MCF 10A (cell line): ENCODE measurements at regions of chr19 and their contacts with region 1.

Region 1: DNA sequence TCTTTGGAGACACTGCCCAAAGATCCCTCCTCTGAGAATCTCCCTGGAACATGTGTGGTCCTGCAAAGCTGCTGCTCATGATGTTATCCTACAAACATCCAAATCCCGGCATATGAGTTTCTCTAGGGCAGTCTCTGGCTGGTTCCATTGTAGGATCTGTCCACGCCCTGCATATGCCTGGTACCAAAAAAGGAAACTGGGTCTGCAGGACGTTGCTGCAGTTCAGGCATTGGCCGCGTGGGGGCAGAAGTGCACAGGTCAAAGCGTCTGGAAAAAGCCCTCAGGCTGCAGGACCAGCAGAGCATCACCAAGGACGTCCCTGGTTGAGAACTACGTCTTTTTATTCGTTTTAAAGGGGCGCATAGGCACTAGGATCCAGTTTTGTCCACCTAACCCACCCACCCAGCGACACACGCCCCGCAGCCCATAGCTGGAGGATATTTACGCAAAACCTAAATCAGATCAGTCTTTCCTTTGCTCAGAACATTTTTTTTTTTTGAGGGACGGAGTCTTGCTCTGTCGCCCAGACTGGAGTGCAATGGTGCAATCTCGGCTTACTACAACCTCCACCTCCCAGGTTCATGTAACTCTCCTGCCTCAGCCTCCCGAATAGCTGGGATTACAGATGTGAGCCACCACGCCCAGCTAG is 12.9 kb upstream of the ZNF564 start:
- DNase-seq: peak; percentile 86
- H3K4me3 Mint-ChIP-seq: no peak overlapping the region
- H3K27ac Mint-ChIP-seq: no peak overlapping the region
- H3K4me1 Mint-ChIP-seq: peaks cover 6% of the 10 kb centered on the region
- H3K27me3 Mint-ChIP-seq: no peaks in the 10 kb centered on the region
- CTCF ChIP-seq: peak; percentile 88

Region 2: GRCh38 chr19:12660980-12661379 is 96.8 kb after region 1 on chr19:
- CTCF ChIA-PET with region 1: no interaction called
- POLR2A ChIA-PET with region 1: no interaction called
- intact Hi-C with region 1: no loop called
- DNase-seq: no peak
- H3K4me3 Mint-ChIP-seq: no peak overlapping the region
- H3K27ac Mint-ChIP-seq: no peak overlapping the region
- H3K4me1 Mint-ChIP-seq: peaks cover 5% of the 10 kb centered on the region
- H3K27me3 Mint-ChIP-seq: no peaks in the 10 kb centered on the region
- CTCF ChIP-seq: no peak

Region 3: DNA sequence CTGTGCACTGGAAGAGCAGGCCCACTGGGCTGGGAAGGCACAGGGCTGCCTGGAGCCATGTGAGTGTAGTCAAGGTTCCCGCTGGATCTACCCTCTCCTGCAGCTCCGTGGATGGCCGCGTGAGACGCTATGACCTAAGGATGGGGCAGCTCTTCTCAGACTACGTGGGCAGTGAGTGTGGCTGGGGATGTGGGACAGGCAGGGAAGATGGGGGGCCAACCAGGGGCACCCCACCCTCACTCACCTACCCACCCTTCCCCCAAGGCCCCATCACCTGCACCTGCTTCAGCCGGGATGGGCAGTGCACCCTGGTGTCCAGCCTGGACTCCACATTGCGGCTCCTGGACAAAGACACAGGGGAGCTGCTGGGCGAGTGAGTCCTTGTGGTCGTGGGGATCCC is 108.6 kb after region 1 on chr19:
- CTCF ChIA-PET with region 1: interaction called, 12 read pairs
- POLR2A ChIA-PET with region 1: no interaction called
- intact Hi-C with region 1: loop called (anchors 1 kb)
- DNase-seq: no peak
- H3K4me3 Mint-ChIP-seq: no peak overlapping the region
- H3K27ac Mint-ChIP-seq: no peak overlapping the region
- H3K4me1 Mint-ChIP-seq: no peaks in the 10 kb centered on the region
- H3K27me3 Mint-ChIP-seq: no peaks in the 10 kb centered on the region
- CTCF ChIP-seq: no peak